PC-9 (cell line): ENCODE measurements at regions of chr12 and their contacts with region 1.

Region 1: GRCh38 chr12:116455540-116456329 is 103.4 kb upstream of the MAP1LC3B2 start:
- DNase-seq: peak in 1 of 2 experiments; percentile 72
- H3K4me3 ChIP-seq: no peak overlapping the region
- H3K27ac ChIP-seq: peak overlapping the region; percentile 90
- H3K4me1 ChIP-seq: peaks cover 21% of the 10 kb centered on the region
- H3K27me3 ChIP-seq: no peaks in the 10 kb centered on the region
- CTCF ChIP-seq: no peak

Region 2: GRCh38 chr12:115687094-115687493 is 768.6 kb before region 1 on chr12:
- CTCF ChIA-PET with region 1: no interaction called
- POLR2A ChIA-PET with region 1: no interaction called
- intact Hi-C with region 1: no loop called
- DNase-seq: no peak
- H3K4me3 ChIP-seq: no peak overlapping the region
- H3K27ac ChIP-seq: no peak overlapping the region
- H3K4me1 ChIP-seq: no peaks in the 10 kb centered on the region
- H3K27me3 ChIP-seq: peaks cover 10% of the 10 kb centered on the region
- CTCF ChIP-seq: no peak

Region 3: DNA sequence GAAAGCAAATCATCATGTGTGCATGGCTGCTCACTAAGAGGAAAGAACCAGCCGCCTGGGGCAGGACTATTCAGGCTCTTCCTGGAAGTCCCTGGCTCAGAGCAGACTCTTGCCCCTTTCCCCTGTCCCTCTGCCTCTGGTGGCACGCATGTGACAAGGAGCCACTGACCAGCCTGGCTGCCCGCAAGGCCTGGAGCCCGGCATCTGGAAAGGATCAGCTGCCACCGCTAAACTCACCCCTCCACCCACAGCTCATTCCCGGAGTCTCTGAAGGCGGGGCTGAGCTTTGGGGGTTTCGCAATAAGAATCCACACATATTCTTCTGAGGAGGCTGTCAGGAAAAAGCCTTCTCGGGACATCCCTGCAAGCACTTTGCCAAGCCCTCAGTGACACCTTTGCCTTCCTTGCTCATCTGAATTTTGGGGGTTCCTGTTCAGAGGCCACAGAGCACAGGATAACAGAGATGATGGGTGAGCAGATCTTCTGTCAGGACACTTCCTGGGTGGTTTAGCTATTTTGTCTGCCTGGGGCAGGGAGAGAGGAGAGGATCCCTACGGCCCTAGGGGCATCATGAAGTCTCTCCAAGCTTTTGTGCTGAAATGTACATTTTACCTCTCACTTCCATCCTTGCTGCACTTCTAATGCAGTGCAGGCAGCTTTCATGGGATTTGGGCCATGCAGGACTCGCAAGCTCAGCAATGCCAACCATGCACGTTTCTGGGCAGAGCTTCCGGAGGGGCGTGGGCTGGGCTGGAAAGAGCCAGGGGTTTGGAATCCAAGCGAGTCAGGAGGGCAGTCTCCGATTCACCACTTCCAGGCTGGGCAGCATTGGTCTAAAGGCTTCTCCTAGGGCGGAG is 21.4 kb before region 1 on chr12:
- CTCF ChIA-PET with region 1: no interaction called
- POLR2A ChIA-PET with region 1: interaction called, 36 read pairs
- intact Hi-C with region 1: loop called (anchors 1 kb)
- DNase-seq: peak; percentile 94
- H3K4me3 ChIP-seq: peak overlapping the region; percentile 42; the same call in 1 of the 2 replicates
- H3K27ac ChIP-seq: peak overlapping the region; percentile 80
- H3K4me1 ChIP-seq: peaks cover 24% of the 10 kb centered on the region
- H3K27me3 ChIP-seq: no peaks in the 10 kb centered on the region
- CTCF ChIP-seq: no peak

Region 4: DNA sequence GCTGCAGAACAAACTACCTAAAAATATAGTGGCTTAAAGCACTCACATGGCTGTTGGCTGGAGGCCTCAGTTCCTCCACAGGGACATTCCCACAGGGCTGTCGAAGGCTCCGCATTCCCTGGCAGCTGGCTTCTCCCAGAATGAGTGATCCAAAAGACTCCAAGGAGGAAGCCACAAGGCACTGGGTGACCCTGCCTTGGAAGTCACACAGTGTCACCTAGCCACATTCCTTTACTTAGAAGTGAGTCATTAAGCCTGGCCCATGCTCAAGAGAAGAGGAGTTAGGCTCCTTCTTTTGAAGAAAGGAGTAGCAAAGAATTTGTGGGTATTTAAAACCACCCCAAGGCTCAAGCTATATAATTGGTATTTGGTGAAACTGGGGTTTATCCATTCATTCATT is 39.5 kb after region 1 on chr12:
- CTCF ChIA-PET with region 1: no interaction called
- POLR2A ChIA-PET with region 1: interaction called, 8 read pairs
- intact Hi-C with region 1: loop called (anchors 1 kb)
- DNase-seq: peak; percentile 78 to 99
- H3K4me3 ChIP-seq: no peak overlapping the region
- H3K27ac ChIP-seq: peak overlapping the region; percentile 95
- H3K4me1 ChIP-seq: peaks cover 61% of the 10 kb centered on the region
- H3K27me3 ChIP-seq: no peaks in the 10 kb centered on the region
- CTCF ChIP-seq: no peak

Region 5: GRCh38 chr12:116559162-116559935 is 103.6 kb after region 1 on chr12 and contains the start of gene MAP1LC3B2:
- CTCF ChIA-PET with region 1: no interaction called
- POLR2A ChIA-PET with region 1: no interaction called
- intact Hi-C with region 1: loop called (anchors 1 kb)
- DNase-seq: peak; percentile 88 to 95
- H3K4me3 ChIP-seq: peak within 1 kb of the TSS; percentile 18; the same call in 1 of the 2 replicates
- H3K27ac ChIP-seq: peak within 1 kb of the TSS; percentile 87
- H3K4me1 ChIP-seq: peaks cover 23% of the 10 kb centered on the region
- H3K27me3 ChIP-seq: no peaks in the 10 kb centered on the region
- CTCF ChIP-seq: no peak
- total RNA-seq, gene MAP1LC3B2: 1.1 and 1.4 TPM in 2 replicates

Region 6: DNA sequence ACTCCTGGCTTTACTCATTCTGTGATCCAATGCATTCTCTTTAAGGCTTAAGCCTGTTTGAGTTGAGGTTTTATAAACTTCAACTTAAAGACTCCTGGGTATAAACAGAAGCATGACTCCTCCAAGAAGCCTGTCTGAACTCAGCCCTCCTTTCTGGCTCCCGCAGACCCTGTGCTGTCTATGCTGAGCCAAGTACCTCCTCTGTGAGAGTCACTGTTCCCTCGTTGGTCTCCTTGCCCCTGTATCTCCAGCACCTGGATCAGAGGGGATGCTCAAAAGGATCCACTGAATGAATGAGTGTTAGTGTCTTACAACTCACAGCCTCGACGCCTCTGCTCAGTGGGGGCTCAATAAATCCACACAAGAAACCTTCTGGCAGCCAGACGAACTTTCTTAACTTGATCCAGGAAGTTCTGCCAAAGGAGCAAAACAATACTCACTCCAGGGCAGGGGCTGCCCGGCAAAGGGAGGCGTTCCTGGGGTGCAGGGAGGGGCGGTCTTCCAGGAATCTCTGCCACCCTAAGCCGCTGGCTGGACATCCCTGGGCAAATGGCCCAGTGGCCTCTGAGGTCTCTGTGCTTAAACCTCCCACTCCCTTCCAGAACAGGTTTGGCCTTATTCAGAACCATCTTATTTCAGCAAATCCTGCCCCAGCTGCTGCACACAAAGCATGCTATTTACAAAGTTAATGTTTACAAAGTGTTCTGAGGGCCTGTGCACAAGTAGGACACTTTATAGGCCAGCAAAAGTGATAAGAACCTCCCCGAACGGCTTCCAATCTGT is 136.3 kb after region 1 on chr12:
- CTCF ChIA-PET with region 1: no interaction called
- POLR2A ChIA-PET with region 1: interaction called, 14 read pairs
- intact Hi-C with region 1: no loop called
- DNase-seq: peak in 1 of 2 experiments; percentile 70
- H3K4me3 ChIP-seq: no peak overlapping the region
- H3K27ac ChIP-seq: no peak overlapping the region
- H3K4me1 ChIP-seq: peaks cover 12% of the 10 kb centered on the region; the same call in 1 of the 2 replicates
- H3K27me3 ChIP-seq: 0 out of 2 replicates have a peak, but pooled peaks cover 3% of the 10 kb centered on the region
- CTCF ChIP-seq: no peak

Region 7: GRCh38 chr12:116631619-116632018 is 175.9 kb after region 1 on chr12:
- CTCF ChIA-PET with region 1: no interaction called
- POLR2A ChIA-PET with region 1: no interaction called
- intact Hi-C with region 1: no loop called
- DNase-seq: no peak
- H3K4me3 ChIP-seq: no peak overlapping the region
- H3K27ac ChIP-seq: no peak overlapping the region
- H3K4me1 ChIP-seq: no peaks in the 10 kb centered on the region
- H3K27me3 ChIP-seq: no peaks in the 10 kb centered on the region
- CTCF ChIP-seq: no peak